ENCODE measurements at regions of chr3 and their contacts with region 1.

Region 1: DNA sequence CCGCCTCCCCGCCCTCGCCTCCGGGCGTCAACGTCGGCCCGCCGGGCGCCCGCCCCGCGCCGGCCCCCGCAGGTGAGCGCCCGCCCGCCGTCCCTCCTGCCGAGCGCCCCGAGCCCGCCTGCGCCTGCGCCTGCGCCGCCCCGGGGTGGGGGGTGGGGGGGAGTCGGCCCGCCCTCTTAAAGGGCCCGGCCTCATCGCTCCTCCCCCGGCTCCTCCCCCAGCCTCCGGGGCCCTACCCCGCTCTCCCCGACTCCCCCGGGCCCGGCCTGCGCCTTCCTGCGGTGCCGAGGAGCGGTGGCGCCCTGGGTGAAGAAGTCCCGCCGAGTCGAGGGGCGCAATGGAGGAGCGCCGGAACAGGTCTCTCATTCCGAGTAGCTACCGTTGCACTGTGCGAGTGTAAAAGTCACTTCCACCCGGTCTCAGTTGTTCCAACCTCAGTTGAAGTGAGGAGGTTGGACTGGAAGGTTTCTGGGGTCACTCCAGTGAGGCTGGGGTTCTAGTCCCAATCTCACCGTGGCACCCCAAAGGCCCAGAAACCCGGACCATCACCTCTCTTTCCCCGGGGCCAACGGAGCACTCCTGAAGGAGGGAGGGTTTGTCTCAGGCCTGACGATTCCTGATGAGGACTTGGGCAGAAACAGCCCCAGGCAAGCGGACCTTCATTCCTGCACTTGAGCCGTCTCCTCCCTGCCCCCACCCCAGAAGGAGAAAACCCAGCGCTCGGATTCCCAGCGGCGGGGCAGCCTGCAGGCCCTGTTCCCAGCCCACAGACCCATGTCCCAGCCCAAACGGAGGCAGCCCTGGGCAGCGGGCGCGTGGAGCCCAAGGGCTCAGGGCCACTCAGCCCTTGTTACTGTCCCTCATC is 1.5 kb upstream of the TNK2 start:
- DNase-seq: peak; percentile 82 to 93 (median 87)
- ATAC-seq: peak; percentile 81
- H3K4me3 ChIP-seq: peak overlapping the region; percentile 54
- H3K4me3 Mint-ChIP-seq: peak overlapping the region; percentile 40 to 97 (median 70)
- H3K27ac ChIP-seq: peak overlapping the region; percentile 68
- H3K27ac Mint-ChIP-seq: peak overlapping the region in 6 of 9 donors; percentile 10 to 90 (median 68)
- H3K4me1 ChIP-seq: peaks cover 26 to 27% of the 10 kb centered on the region in 2 donors
- H3K4me1 Mint-ChIP-seq: peaks cover 25 to 39% (median 33%) of the 10 kb centered on the region in 7 donors
- H3K27me3 ChIP-seq: no peaks in the 10 kb centered on the region
- H3K27me3 Mint-ChIP-seq: no peaks in the 10 kb centered on the region

Region 2: DNA sequence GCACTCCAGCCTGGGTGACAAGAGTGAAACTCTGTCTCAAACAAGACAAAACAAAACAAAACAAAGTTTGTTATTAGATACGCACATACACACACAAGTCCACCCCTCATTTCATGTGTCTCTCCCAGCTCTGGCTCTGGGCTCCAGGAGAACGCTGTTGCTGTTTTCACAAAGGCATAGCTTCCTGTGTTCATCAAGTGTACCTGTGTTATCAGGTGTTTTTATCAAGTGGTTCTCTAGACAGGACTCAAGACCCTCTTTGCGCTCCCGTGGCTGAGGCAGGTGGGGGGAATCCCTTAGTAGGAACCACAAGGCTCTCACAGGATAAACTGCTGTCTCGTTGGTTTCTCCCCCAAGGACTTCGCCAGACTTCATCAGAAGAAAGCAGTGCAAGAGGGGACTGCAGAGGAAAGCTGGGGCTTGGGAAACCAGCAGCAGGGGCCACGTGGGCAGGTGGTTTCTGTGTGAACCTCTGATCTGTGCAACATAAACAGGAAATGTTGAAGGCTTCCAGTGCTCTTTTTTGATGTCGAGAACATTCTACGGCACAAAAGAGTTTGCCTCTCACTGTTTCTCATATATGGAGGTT is 359.9 kb before region 1 on chr3:
- CTCF ChIA-PET with region 1: interaction called, 3 read pairs
- POLR2A ChIA-PET with region 1: interaction called, 11 read pairs
- intact Hi-C with region 1: no loop called
- DNase-seq: peak; percentile 45 to 95 (median 94)
- ATAC-seq: peak; percentile 89
- H3K4me3 ChIP-seq: peak overlapping the region; percentile 43
- H3K4me3 Mint-ChIP-seq: peak overlapping the region; percentile 73 to 98 (median 90)
- H3K27ac ChIP-seq: peak overlapping the region; percentile 69
- H3K27ac Mint-ChIP-seq: peak overlapping the region; percentile 91 to 100 (median 99)
- H3K4me1 ChIP-seq: peaks cover 70 to 72% of the 10 kb centered on the region in 2 donors
- H3K4me1 Mint-ChIP-seq: peaks cover 44 to 93% (median 86%) of the 10 kb centered on the region in 7 donors
- H3K27me3 ChIP-seq: no peaks in the 10 kb centered on the region
- H3K27me3 Mint-ChIP-seq: no peaks in the 10 kb centered on the region

Region 3: GRCh38 chr3:195558602-195559001 is 351.3 kb before region 1 on chr3:
- CTCF ChIA-PET with region 1: interaction called, 3 read pairs
- POLR2A ChIA-PET with region 1: interaction called, 3 read pairs
- intact Hi-C with region 1: loop called in 1 of 2 experiments (anchors 1 kb)
- DNase-seq: peak in 7 of 9 donors; percentile 56 to 75 (median 67)
- ATAC-seq: peak; percentile 72
- H3K4me3 ChIP-seq: no peak overlapping the region
- H3K4me3 Mint-ChIP-seq: peak overlapping the region in 1 of 10 donors; percentile 33
- H3K27ac ChIP-seq: no peak overlapping the region
- H3K27ac Mint-ChIP-seq: peak overlapping the region in 8 of 9 donors; percentile 46 to 83 (median 68)
- H3K4me1 ChIP-seq: peaks cover 0 to 37% of the 10 kb centered on the region in 2 donors
- H3K4me1 Mint-ChIP-seq: peaks cover 20 to 45% (median 38%) of the 10 kb centered on the region in 7 donors
- H3K27me3 ChIP-seq: no peaks in the 10 kb centered on the region
- H3K27me3 Mint-ChIP-seq: no peaks in the 10 kb centered on the region

Region 4: GRCh38 chr3:195863121-195864006 is 46.5 kb before region 1 on chr3:
- CTCF ChIA-PET with region 1: interaction called, 31 read pairs
- POLR2A ChIA-PET with region 1: interaction called, 3 read pairs
- intact Hi-C with region 1: loop called (anchors 1 kb)
- DNase-seq: peak; percentile 29 to 73 (median 50)
- ATAC-seq: peak; percentile 91
- H3K4me3 ChIP-seq: no peak overlapping the region
- H3K4me3 Mint-ChIP-seq: no peak overlapping the region
- H3K27ac ChIP-seq: no peak overlapping the region
- H3K27ac Mint-ChIP-seq: peak overlapping the region in 2 of 9 donors; percentile 62 to 77
- H3K4me1 ChIP-seq: no peaks in the 10 kb centered on the region
- H3K4me1 Mint-ChIP-seq: peaks cover 3 to 15% (median 7%) of the 10 kb centered on the region in 7 donors
- H3K27me3 ChIP-seq: no peaks in the 10 kb centered on the region
- H3K27me3 Mint-ChIP-seq: no peaks in the 10 kb centered on the region

Region 5: GRCh38 chr3:195894780-195895607 is 14.9 kb before region 1 on chr3:
- CTCF ChIA-PET with region 1: interaction called, 74 read pairs
- POLR2A ChIA-PET with region 1: interaction called, 209 read pairs
- intact Hi-C with region 1: loop called (anchors 1 kb)
- DNase-seq: peak; percentile 58 to 77 (median 69)
- ATAC-seq: peak; percentile 78
- H3K4me3 ChIP-seq: peak overlapping the region; percentile 98
- H3K4me3 Mint-ChIP-seq: peak overlapping the region; percentile 88 to 96 (median 92)
- H3K27ac ChIP-seq: peak overlapping the region; percentile 75
- H3K27ac Mint-ChIP-seq: peak overlapping the region; percentile 88 to 96 (median 91)
- H3K4me1 ChIP-seq: peaks cover 7 to 32% of the 10 kb centered on the region in 2 donors
- H3K4me1 Mint-ChIP-seq: peaks cover 43 to 60% (median 49%) of the 10 kb centered on the region in 7 donors
- H3K27me3 ChIP-seq: no peaks in the 10 kb centered on the region
- H3K27me3 Mint-ChIP-seq: no peaks in the 10 kb centered on the region

Region 6: DNA sequence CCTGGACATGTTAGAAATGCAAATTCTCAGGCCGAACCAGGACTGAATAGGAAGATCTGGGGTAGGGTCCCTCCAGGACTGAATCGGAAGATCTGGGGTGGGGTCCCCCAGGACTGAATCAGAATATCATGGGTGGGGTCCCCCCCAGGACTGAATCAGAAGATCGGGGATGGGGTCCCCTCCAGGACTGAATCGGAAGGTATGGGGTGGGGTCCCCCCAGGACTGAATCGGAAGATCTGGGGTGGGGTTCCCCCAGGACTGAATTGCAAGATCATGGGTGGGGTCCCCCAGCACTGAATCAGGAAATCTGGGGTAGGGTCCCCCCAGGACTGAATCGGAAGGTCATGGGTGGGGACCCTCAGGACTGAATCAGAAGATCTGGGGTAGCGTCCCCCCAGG is 46.7 kb after region 1 on chr3:
- CTCF ChIA-PET with region 1: no interaction called
- POLR2A ChIA-PET with region 1: no interaction called
- intact Hi-C with region 1: loop called (anchors 2 kb)
- DNase-seq: no peak
- ATAC-seq: no peak
- H3K4me3 ChIP-seq: no peak overlapping the region
- H3K4me3 Mint-ChIP-seq: no peak overlapping the region
- H3K27ac ChIP-seq: no peak overlapping the region
- H3K27ac Mint-ChIP-seq: peak overlapping the region in 1 of 9 donors; percentile 19
- H3K4me1 ChIP-seq: no peaks in the 10 kb centered on the region
- H3K4me1 Mint-ChIP-seq: peaks cover 8 to 28% (median 18%) of the 10 kb centered on the region in 7 donors
- H3K27me3 ChIP-seq: no peaks in the 10 kb centered on the region
- H3K27me3 Mint-ChIP-seq: no peaks in the 10 kb centered on the region

Region 7: DNA sequence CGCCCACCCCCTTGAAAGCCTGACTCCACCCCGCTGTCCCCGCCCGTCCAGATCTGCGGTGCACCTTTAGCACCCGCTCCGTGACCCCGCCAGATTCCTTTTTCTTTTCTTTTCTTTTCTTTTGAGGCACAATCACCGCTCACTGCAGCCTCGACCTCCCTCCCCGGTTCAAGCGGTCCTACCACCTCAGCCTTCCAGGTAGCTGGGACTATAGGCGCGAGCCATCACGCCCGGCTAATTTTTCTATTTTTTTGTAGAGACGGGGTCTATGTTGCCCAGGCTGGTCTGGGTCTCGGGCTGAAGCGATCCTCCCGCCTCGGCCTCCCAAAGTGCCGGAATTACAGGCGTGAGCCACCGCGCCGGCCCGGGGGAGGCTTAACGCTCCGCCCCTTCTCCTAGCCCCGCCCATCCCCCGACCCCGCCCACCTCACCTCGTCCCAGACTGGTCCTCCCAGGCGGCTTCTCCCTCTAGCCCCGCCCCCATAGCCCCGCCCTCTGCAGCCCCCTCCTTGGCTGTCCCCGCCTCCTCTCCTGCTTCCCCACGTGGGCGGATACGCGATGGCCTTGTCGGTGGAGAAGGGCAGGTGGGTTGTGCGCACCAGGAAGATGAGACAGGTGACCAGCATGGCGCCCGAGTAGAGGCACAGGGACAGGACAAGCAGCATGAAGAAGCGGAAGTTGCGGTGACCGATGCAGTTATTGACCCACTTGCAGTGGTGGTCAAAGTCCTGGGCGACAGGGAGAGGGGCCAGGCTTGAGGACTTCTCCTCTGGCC is 298.1 kb after region 1 on chr3:
- CTCF ChIA-PET with region 1: no interaction called
- POLR2A ChIA-PET with region 1: no interaction called
- intact Hi-C with region 1: loop called in 1 of 2 experiments (anchors 5 kb)
- DNase-seq: peak in 8 of 9 donors; percentile 31 to 76 (median 48)
- ATAC-seq: peak; percentile 81
- H3K4me3 ChIP-seq: peak overlapping the region; percentile 56
- H3K4me3 Mint-ChIP-seq: peak overlapping the region; percentile 68 to 89 (median 86)
- H3K27ac ChIP-seq: no peak overlapping the region
- H3K27ac Mint-ChIP-seq: peak overlapping the region in 8 of 9 donors; percentile 32 to 86 (median 56)
- H3K4me1 ChIP-seq: peaks cover 0 to 3% of the 10 kb centered on the region in 2 donors
- H3K4me1 Mint-ChIP-seq: peaks cover 5 to 24% (median 12%) of the 10 kb centered on the region in 7 donors
- H3K27me3 ChIP-seq: no peaks in the 10 kb centered on the region
- H3K27me3 Mint-ChIP-seq: peaks cover 0 to 31% (median 0%) of the 10 kb centered on the region in 5 donors

Measured in naive thymus-derived CD4-positive, alpha-beta T cell (primary cell).